Heart left ventricle (tissue), 16 donors: ENCODE measurements at regions of chr16 and their contacts with region 1.

Region 1: DNA sequence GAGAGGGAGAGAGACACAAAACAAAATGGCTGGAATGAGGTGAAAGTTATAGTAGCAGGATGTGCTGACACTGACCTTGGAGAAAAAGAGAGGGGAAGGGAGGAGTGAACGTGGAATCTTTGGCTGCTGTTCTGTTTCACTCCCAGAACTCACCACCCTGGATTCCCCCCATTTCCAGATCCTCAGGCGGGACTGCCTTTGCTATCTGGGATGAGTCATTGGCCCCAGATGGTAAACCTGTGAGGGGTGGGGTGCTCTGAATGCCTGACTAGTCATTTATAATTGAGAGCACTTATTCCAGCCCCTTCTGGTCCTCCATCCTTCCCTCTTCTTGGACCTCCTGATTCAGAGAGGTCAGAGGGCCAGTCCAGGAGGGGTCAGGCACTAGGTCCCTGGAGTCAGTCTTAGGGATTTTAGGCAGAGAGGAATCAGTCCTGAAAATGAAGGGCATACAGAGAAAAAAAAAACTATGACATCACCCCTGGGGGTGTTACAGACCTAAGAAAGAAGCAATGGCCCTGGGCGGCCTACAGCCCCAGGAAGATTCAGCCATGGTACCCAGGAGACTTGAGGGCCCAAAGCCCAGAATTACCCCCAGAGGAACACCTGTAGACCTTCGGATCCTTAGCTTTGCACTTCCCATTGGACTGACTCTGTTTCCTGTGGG is 2.2 kb upstream of the ZG16 start:
- DNase-seq: no peak
- ATAC-seq: no peak
- H3K4me3 ChIP-seq: no peak overlapping the region
- H3K27ac ChIP-seq: no peak overlapping the region
- H3K4me1 ChIP-seq: no peaks in the 10 kb centered on the region
- H3K27me3 ChIP-seq: peaks cover 0 to 6% (median 0%) of the 10 kb centered on the region in 9 donors
- CTCF ChIP-seq: no peak
- POLR2A ChIP-seq: no peak

Region 2: DNA sequence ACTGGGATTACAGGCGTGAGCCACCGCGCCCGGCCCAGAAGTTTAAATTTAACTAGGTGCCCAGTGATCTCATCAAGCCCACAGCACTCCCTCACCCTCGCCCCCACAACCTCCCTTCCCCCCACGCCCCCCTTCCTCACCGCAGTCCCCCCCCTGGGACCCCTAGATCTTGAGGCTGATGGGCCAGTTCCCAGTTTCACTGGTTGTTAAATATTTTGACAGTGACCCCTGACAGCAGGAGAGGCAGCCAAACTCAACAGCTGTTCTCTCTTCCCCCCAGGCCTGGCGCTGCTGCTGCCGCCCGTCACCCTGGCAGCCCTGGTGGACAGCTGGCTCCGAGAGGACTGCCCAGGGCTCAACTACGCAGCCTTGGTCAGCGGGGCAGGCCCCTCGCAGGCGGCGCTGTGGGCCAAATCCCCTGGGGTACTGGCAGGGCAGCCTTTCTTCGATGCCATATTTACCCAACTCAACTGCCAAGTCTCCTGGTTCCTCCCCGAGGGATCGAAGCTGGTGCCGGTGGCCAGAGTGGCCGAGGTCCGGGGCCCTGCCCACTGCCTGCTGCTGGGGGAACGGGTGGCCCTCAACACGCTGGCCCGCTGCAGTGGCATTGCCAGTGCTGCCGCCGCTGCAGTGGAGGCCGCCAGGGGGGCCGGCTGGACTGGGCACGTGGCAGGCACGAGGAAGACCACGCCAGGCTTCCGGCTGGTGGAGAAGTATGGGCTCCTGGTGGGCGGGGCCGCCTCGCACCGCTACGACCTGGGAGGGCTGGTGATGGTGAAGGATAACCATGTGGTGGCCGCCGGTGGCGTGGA is 81.3 kb before region 1 on chr16:
- intact Hi-C with region 1: loop called in 1 of 10 experiments (anchors 10 kb)
- DNase-seq: no peak
- ATAC-seq: no peak
- H3K4me3 ChIP-seq: no peak overlapping the region
- H3K27ac ChIP-seq: no peak overlapping the region
- H3K4me1 ChIP-seq: no peaks in the 10 kb centered on the region
- H3K27me3 ChIP-seq: no peaks in the 10 kb centered on the region
- CTCF ChIP-seq: no peak
- POLR2A ChIP-seq: no peak

Region 3: GRCh38 chr16:29729116-29729521 is 46.8 kb before region 1 on chr16:
- intact Hi-C with region 1: loop called in 1 of 10 experiments (anchors 2 kb)
- DNase-seq: no peak
- ATAC-seq: peak in 3 of 4 donors; percentile 38 to 69 (median 47)
- H3K4me3 ChIP-seq: peak overlapping the region in 3 of 12 donors; percentile 13 to 29 (median 19)
- H3K27ac ChIP-seq: no peak overlapping the region
- H3K4me1 ChIP-seq: peaks cover 0 to 7% (median 0%) of the 10 kb centered on the region in 12 donors
- H3K27me3 ChIP-seq: peaks cover 0 to 2% (median 0%) of the 10 kb centered on the region in 9 donors
- CTCF ChIP-seq: peak; percentile 25 to 68 (median 46)
- POLR2A ChIP-seq: no peak